Activated CD8-positive, alpha-beta T cell treated with anti-CD3 and anti-CD28 coated beads for 36 hours (primary cell): ENCODE measurements at regions of chr11 and their contacts with region 1.

Region 1: GRCh38 chr11:102666331-102666957 is 39.1 kb downstream of the MMP27 start:
- DNase-seq: peak; percentile 23
- ATAC-seq: no peak
- H3K4me3 Mint-ChIP-seq: no peak overlapping the region
- H3K27ac Mint-ChIP-seq: no peak overlapping the region
- H3K4me1 Mint-ChIP-seq: no peaks in the 10 kb centered on the region
- H3K27me3 Mint-ChIP-seq: peaks cover 2% of the 10 kb centered on the region
- CTCF ChIP-seq: peak; percentile 78

Region 2: GRCh38 chr11:102620818-102621561 is 45.5 kb before region 1 on chr11:
- CTCF ChIA-PET with region 1: interaction called, 15 read pairs
- POLR2A ChIA-PET with region 1: no interaction called
- intact Hi-C with region 1: no loop called
- DNase-seq: no peak
- ATAC-seq: no peak
- H3K4me3 Mint-ChIP-seq: no peak overlapping the region
- H3K27ac Mint-ChIP-seq: no peak overlapping the region
- H3K4me1 Mint-ChIP-seq: no peaks in the 10 kb centered on the region
- H3K27me3 Mint-ChIP-seq: peaks cover 3% of the 10 kb centered on the region
- CTCF ChIP-seq: no peak

Region 3: GRCh38 chr11:102653744-102654291 is 12.6 kb before region 1 on chr11:
- CTCF ChIA-PET with region 1: interaction called, 37 read pairs
- POLR2A ChIA-PET with region 1: no interaction called
- intact Hi-C with region 1: no loop called
- DNase-seq: no peak
- ATAC-seq: no peak
- H3K4me3 Mint-ChIP-seq: no peak overlapping the region
- H3K27ac Mint-ChIP-seq: no peak overlapping the region
- H3K4me1 Mint-ChIP-seq: no peaks in the 10 kb centered on the region
- H3K27me3 Mint-ChIP-seq: peaks cover 13% of the 10 kb centered on the region
- CTCF ChIP-seq: no peak

Region 4: DNA sequence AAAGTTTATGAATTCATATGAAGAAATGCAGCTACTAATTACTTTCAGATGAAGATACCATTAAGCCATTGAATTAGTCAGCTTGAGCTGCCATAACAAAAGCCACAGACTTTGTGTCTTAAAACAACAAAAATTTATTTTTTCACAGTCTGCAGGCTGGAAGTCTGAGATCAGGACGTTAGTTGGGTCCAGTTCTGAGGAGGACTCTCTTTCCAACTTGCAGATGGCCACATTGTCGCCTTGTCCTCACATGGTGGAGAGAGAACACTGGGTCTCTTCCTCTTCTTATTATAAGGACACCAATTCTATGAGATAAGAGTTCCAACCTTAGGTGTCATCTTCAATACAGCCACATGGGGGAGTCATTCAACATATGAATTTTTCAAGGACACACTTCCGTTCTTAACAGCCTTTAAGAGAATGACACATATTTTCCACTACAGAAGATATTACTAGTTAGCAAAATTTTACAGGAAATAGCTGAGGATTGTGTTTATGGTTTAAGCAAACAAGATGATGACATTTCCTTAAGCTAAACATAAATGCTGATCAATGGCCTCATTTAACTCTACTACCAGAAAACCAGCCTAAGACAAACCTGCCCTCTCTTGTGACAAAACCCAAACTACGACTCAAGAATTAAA is 369.5 kb after region 1 on chr11:
- CTCF ChIA-PET with region 1: no interaction called
- POLR2A ChIA-PET with region 1: no interaction called
- intact Hi-C with region 1: no loop called
- DNase-seq: peak; percentile 65
- ATAC-seq: peak; percentile 92
- H3K4me3 Mint-ChIP-seq: peak overlapping the region; percentile 39
- H3K27ac Mint-ChIP-seq: peak overlapping the region; percentile 85
- H3K4me1 Mint-ChIP-seq: peaks cover 22% of the 10 kb centered on the region
- H3K27me3 Mint-ChIP-seq: no peaks in the 10 kb centered on the region
- CTCF ChIP-seq: peak; percentile 74